Mammary epithelial cell (primary cell): ENCODE measurements at regions of chr11 and their contacts with region 1.

Region 1: DNA sequence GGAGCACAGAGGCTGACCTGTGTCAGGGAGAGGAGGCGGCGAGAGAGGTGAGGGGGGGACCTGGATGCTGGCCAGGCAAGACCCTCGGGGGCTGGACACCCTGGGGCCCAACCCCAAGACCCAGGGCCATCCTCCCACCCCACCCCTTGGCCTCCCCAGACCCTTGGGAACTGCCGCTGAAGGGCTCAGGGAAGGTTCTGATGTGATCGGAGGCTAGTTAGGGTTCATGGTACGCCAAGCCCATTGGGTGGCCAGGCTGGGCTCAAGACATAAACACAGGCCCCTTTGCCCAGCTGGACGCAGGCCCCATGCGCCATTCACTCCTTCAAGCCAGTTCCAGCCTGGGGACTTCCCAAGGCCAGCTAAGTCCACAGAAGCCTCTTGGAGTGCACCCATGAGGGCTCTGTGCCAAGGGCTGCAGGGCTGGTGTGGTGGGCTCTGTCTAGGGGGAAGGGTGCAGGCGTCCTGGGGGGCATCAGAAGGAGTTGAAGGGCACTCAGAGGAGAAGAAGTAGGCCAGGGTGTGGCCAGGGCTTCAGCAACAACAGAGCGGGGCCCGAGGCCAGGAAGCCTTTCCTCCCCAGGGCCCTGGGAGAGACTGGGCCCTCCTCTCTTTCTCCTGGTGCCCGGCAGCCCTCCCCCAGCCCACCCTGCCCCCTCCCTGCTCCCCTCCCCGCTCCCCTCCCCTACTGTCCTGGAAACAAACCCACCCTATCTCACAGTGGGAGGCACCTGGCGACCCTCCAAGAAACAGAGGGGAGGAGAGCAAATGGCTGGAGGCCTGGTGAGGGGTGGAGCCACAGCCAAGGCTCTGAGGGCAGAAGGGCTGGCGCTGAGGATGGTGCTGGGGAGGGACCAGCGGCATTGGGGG is 12.9 kb downstream of the TSPAN32 start:
- DNase-seq: no peak
- H3K4me3 ChIP-seq: no peak overlapping the region
- H3K27ac ChIP-seq: no peak overlapping the region
- H3K4me1 ChIP-seq: peaks cover 10% of the 10 kb centered on the region
- H3K27me3 ChIP-seq: no peaks in the 10 kb centered on the region
- CTCF ChIP-seq: no peak

Region 2: GRCh38 chr11:2366261-2366660 is 51.5 kb after region 1 on chr11:
- CTCF ChIA-PET with region 1: no interaction called
- dilution Hi-C with region 1: loop called (anchors 5 kb)
- in situ Hi-C with region 1: no loop called
- intact Hi-C with region 1: no loop called
- DNase-seq: no peak
- H3K4me3 ChIP-seq: no peak overlapping the region
- H3K27ac ChIP-seq: no peak overlapping the region
- H3K4me1 ChIP-seq: no peaks in the 10 kb centered on the region
- H3K27me3 ChIP-seq: peaks cover 2% of the 10 kb centered on the region
- CTCF ChIP-seq: no peak

Region 3: DNA sequence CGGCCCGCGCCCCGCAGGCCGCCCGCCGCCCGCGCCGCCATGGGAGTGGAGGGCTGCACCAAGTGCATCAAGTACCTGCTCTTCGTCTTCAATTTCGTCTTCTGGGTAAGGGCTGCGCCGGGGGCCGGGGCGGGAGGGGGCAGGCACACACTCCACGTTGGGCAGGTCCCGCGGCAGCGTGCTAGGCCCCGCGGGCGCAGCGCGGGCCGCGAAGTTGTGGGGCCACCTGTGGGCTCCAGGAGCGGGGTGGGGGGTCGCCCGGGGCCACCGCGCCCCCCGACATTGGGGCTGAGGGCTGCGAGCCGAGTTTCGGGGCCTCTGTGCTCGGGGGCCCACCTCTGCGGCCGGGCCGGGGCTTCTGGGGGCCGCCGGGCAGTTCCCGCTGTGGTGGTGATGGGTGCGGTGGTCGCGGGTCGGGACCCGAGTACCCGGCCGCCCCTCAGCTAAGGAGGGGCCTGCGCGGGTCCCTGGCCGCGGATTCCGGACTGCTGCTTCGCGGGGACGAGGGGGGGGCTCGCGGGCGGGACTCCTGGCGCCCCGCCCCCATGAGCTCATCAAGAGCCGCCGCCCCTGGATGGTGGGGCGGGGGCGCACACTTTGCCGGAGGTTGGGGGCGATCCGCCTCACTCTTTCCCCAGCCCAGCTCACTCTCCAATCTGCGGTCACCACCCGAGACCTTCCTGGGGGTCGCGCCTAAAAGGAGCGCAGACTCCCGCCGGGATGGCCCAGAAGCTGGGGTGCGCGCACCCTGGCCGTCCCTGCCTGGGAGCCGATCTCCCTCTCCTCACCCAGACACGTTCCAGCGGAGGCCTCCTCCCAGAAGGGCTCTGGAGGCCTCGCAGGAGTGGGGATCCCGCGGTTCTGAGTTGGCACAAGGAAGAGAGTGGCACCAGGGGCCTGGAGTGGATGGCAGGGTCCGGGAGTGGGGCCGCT is 63.0 kb after region 1 on chr11:
- CTCF ChIA-PET with region 1: no interaction called
- dilution Hi-C with region 1: no loop called
- in situ Hi-C with region 1: no loop called
- intact Hi-C with region 1: no loop called
- DNase-seq: no peak
- H3K4me3 ChIP-seq: peak overlapping the region; percentile 73 to 86 (median 82)
- H3K27ac ChIP-seq: peak overlapping the region; percentile 37
- H3K4me1 ChIP-seq: peaks cover 47% of the 10 kb centered on the region
- H3K27me3 ChIP-seq: no peaks in the 10 kb centered on the region
- CTCF ChIP-seq: no peak